Mammary epithelial cell (primary cell): ENCODE measurements at regions of chr19 and their contacts with region 1.

Region 1: GRCh38 chr19:15091901-15092753 is 10.1 kb downstream of the OR1I1 start:
- DNase-seq: peak; percentile 41
- H3K4me3 ChIP-seq: no peak overlapping the region
- H3K27ac ChIP-seq: no peak overlapping the region
- H3K4me1 ChIP-seq: peaks cover 5% of the 10 kb centered on the region
- H3K27me3 ChIP-seq: no peaks in the 10 kb centered on the region
- CTCF ChIP-seq: peak; percentile 51 to 58

Region 2: GRCh38 chr19:14901675-14902260 is 190.4 kb before region 1 on chr19:
- CTCF ChIA-PET with region 1: no interaction called
- dilution Hi-C with region 1: loop called (anchors 5 kb)
- in situ Hi-C with region 1: no loop called
- intact Hi-C with region 1: no loop called
- DNase-seq: peak; percentile 17
- H3K4me3 ChIP-seq: no peak overlapping the region
- H3K27ac ChIP-seq: no peak overlapping the region
- H3K4me1 ChIP-seq: no peaks in the 10 kb centered on the region
- H3K27me3 ChIP-seq: no peaks in the 10 kb centered on the region
- CTCF ChIP-seq: no peak

Region 3: DNA sequence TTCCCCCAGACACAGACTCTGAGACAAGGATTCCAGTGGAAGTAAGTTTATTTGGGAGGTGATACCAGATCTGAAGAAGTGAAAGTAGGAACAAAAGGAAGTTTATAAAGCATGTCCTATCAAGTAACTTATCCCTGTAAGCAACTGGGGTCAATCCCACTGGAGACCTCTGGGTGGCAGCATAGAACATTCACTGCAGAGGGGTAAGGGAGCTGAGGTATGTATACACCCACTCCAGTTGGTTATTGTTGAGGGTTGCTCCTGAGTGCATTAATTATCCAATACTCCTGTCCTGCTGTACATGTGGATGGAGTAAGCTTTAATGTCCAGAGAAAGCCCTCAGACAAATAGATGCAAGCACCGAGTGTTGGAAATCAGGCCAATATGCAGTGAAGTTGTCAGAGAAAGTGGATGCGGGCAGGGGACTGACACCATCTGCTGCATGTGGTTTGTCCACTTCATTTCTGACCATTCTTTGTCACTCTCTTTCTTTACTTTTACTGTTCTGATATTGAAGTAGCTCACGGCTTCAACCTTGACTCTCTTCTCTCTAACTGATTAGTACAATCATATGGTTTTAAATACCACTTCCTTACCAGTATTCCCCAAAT is 62.0 kb after region 1 on chr19:
- CTCF ChIA-PET with region 1: interaction called, 8 read pairs
- dilution Hi-C with region 1: no loop called
- in situ Hi-C with region 1: no loop called
- intact Hi-C with region 1: loop called (anchors 1 kb)
- DNase-seq: peak; percentile 41
- H3K4me3 ChIP-seq: no peak overlapping the region
- H3K27ac ChIP-seq: no peak overlapping the region
- H3K4me1 ChIP-seq: no peaks in the 10 kb centered on the region
- H3K27me3 ChIP-seq: no peaks in the 10 kb centered on the region
- CTCF ChIP-seq: peak; percentile 70 to 81

Region 4: GRCh38 chr19:15195371-15196334 is 103.5 kb after region 1 on chr19:
- CTCF ChIA-PET with region 1: no interaction called
- dilution Hi-C with region 1: no loop called
- in situ Hi-C with region 1: no loop called
- intact Hi-C with region 1: no loop called
- DNase-seq: peak; percentile 84
- H3K4me3 ChIP-seq: peak overlapping the region; percentile 31 to 50 (median 47)
- H3K27ac ChIP-seq: no peak overlapping the region
- H3K4me1 ChIP-seq: peaks cover 14% of the 10 kb centered on the region
- H3K27me3 ChIP-seq: no peaks in the 10 kb centered on the region
- CTCF ChIP-seq: peak in 1 of 2 donors; percentile 25

Region 5: DNA sequence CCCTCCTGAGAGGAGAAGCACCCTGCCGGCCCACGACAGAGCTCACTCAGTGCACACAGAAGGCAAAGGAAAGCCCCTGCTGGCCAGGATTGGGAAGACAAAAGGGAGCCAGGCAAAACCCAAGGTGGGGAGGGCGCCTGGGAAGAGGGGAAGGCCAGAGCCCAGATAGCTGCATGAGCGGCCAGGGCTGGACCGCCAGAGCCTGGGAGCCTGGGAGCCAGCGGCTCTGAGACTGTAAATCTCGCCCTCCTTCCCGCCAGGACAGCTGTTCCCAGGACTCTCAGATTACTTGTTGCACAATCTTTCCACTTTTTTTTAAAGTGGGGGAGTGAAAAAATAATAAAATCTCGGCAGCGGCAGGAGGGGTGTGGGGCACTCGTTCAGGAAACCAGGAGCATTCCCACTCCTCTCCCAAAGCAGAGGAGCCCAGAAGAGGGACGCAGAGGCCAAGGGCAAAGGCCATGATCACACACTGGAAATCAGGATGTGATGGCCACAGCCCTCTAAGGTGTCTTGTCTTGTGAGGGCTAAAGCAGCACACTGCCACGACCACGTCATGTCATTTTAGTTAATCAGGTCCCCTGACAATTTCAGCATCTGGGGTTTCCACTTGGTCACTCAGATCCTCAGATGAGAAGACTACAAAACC is 159.7 kb after region 1 on chr19:
- CTCF ChIA-PET with region 1: no interaction called
- dilution Hi-C with region 1: no loop called
- in situ Hi-C with region 1: loop called in 1 of 2 experiments (anchors 10 kb)
- intact Hi-C with region 1: no loop called
- DNase-seq: peak; percentile 61
- H3K4me3 ChIP-seq: no peak overlapping the region
- H3K27ac ChIP-seq: no peak overlapping the region
- H3K4me1 ChIP-seq: peaks cover 42% of the 10 kb centered on the region
- H3K27me3 ChIP-seq: no peaks in the 10 kb centered on the region
- CTCF ChIP-seq: peak; percentile 39 to 40